CD14-positive monocyte (primary cell): ENCODE measurements at regions of chrX and their contacts with region 1.

Region 1: GRCh38 chrX:47854474-47854873 is 17.8 kb downstream of the ZNF81 start:
- DNase-seq: peak in 2 of 3 donors; percentile 4 to 10
- H3K4me3 ChIP-seq: no peak overlapping the region
- H3K4me3 Mint-ChIP-seq: no peak overlapping the region
- H3K27ac ChIP-seq: no peak overlapping the region
- H3K27ac Mint-ChIP-seq: no peak overlapping the region
- H3K4me1 ChIP-seq: peaks cover 4 to 5% of the 10 kb centered on the region in 2 donors
- H3K4me1 Mint-ChIP-seq: peaks cover 12% of the 10 kb centered on the region
- H3K27me3 ChIP-seq: no peaks in the 10 kb centered on the region
- H3K27me3 Mint-ChIP-seq: peaks cover 0 to 4% (median 0%) of the 10 kb centered on the region in 3 donors
- CTCF ChIP-seq: peak; percentile 31

Region 2: GRCh38 chrX:47650164-47651042 is 204.1 kb before region 1 on chrX and contains the start of gene ELK1:
- intact Hi-C with region 1: no loop called
- DNase-seq: peak; percentile 90 to 93 (median 92)
- H3K4me3 ChIP-seq: peak within 1 kb of the TSS; percentile 55 to 80 (median 65)
- H3K4me3 Mint-ChIP-seq: peak within 1 kb of the TSS; percentile 83 to 92
- H3K27ac ChIP-seq: peak within 1 kb of the TSS; percentile 60 to 76
- H3K27ac Mint-ChIP-seq: peak within 1 kb of the TSS; percentile 88 to 95 (median 94)
- H3K4me1 ChIP-seq: peaks cover 23 to 27% of the 10 kb centered on the region in 2 donors
- H3K4me1 Mint-ChIP-seq: peaks cover 25% of the 10 kb centered on the region
- H3K27me3 ChIP-seq: no peaks in the 10 kb centered on the region
- H3K27me3 Mint-ChIP-seq: peaks cover 0 to 3% (median 2%) of the 10 kb centered on the region in 3 donors
- CTCF ChIP-seq: no peak
- polyA plus RNA-seq, gene ELK1: 9.5 to 11.9 (median 10.7) TPM

Region 3: GRCh38 chrX:48021026-48021900 is 166.8 kb after region 1 on chrX:
- intact Hi-C with region 1: loop called in 1 of 2 experiments (anchors 5 kb)
- DNase-seq: peak; percentile 53 to 79 (median 72)
- H3K4me3 ChIP-seq: peak overlapping the region; percentile 80 to 85 (median 83)
- H3K4me3 Mint-ChIP-seq: peak overlapping the region; percentile 82 to 91
- H3K27ac ChIP-seq: peak overlapping the region; percentile 66 to 94
- H3K27ac Mint-ChIP-seq: peak overlapping the region; percentile 91 to 99 (median 96)
- H3K4me1 ChIP-seq: peaks cover 15 to 16% of the 10 kb centered on the region in 2 donors
- H3K4me1 Mint-ChIP-seq: peaks cover 11% of the 10 kb centered on the region
- H3K27me3 ChIP-seq: no peaks in the 10 kb centered on the region
- H3K27me3 Mint-ChIP-seq: peaks cover 0 to 2% (median 0%) of the 10 kb centered on the region in 3 donors
- CTCF ChIP-seq: no peak